HCT116 (cell line): ENCODE measurements at regions of chr3 and their contacts with region 1.

Region 1: DNA sequence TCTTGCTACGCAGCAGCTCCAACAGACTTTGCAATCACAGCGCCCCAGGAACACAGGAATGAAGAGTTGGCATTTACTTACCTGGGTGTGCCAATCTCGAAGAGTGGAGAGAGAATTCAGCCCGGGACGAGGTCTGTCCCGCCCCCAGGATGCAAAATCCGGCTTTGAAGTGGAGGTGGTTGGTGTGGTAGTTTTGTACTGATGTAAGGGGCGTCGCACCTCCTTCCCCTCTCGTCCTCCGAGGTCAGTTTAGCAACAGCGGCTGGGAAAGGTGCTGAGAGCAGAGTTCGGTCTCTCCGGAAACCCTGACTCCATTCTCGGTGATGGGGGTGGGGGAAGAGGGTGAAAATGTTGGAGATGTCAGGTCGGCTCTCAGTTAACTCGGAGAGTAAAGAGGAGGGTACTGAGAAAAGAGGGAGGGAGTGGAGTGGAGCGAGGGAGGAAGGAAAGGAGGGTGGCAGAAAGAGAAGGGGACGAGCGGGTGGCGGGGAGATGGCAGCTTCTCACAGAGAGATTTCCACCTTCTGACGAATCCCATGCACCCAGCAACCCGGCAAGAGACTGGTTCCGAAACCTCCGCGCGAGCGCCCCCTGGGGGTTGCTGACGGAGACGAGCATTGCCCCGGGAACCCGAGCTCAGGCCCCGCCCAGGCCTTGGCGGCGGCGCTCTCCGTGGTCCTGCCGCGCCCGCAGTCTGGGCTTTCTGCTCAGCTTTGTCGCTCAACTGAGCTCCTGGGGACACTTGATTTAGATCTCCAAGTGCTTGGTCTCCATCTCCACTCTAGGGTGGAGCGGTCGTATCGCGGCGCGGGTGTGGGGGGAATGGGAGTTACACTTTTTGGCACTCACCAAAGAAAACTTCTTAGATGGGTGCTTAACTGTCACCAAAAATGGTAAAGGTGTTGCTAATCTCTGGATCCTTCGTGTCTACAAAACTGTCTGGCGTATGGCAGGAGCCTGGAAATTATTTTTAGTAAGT is at the start of gene CPNE4:
- DNase-seq: peak; percentile 33
- ATAC-seq: peak; percentile 100
- H3K4me3 ChIP-seq: no peak within 1 kb of the TSS
- H3K27ac ChIP-seq: no peak within 1 kb of the TSS
- H3K4me1 ChIP-seq: no peaks in the 10 kb centered on the region
- H3K27me3 ChIP-seq: peaks cover 21% of the 10 kb centered on the region
- CTCF ChIP-seq: peak; percentile 58 to 90 (median 73); a peak in 5 of 6 replicates
- POLR2A ChIP-seq: no peak
- RAD21 ChIP-seq: peak; percentile 56
- total RNA-seq, gene CPNE4: not detected

Region 2: GRCh38 chr3:131216801-131217200 is 818.0 kb before region 1 on chr3:
- CTCF ChIA-PET with region 1: no interaction called
- POLR2A ChIA-PET with region 1: no interaction called
- RAD21 ChIA-PET with region 1: no interaction called
- intact Hi-C with region 1: no loop called
- DNase-seq: peak; percentile 74
- ATAC-seq: peak; percentile 93
- H3K4me3 ChIP-seq: peak overlapping the region in 1 of 2 experiments; percentile 38; a peak in 1 of 4 replicates
- H3K27ac ChIP-seq: peak overlapping the region; percentile 2; the same call in 1 of the 2 replicates
- H3K4me1 ChIP-seq: peaks cover 15 to 30% of the 10 kb centered on the region in 2 experiments
- H3K27me3 ChIP-seq: no peaks in the 10 kb centered on the region
- CTCF ChIP-seq: no peak
- POLR2A ChIP-seq: no peak
- RAD21 ChIP-seq: no peak

Region 3: GRCh38 chr3:131568460-131568859 is 466.3 kb before region 1 on chr3:
- CTCF ChIA-PET with region 1: no interaction called
- POLR2A ChIA-PET with region 1: no interaction called
- RAD21 ChIA-PET with region 1: no interaction called
- intact Hi-C with region 1: no loop called
- DNase-seq: no peak
- ATAC-seq: no peak
- H3K4me3 ChIP-seq: no peak overlapping the region
- H3K27ac ChIP-seq: no peak overlapping the region
- H3K4me1 ChIP-seq: no peaks in the 10 kb centered on the region
- H3K27me3 ChIP-seq: peaks cover 64% of the 10 kb centered on the region
- CTCF ChIP-seq: peak in 2 of 3 experiments; percentile 25 to 31; a peak in 3 of 6 replicates
- POLR2A ChIP-seq: no peak
- RAD21 ChIP-seq: no peak

Region 4: GRCh38 chr3:131898346-131898745 is 136.4 kb before region 1 on chr3:
- CTCF ChIA-PET with region 1: no interaction called
- POLR2A ChIA-PET with region 1: no interaction called
- RAD21 ChIA-PET with region 1: no interaction called
- intact Hi-C with region 1: no loop called
- DNase-seq: no peak
- ATAC-seq: no peak
- H3K4me3 ChIP-seq: no peak overlapping the region
- H3K27ac ChIP-seq: no peak overlapping the region
- H3K4me1 ChIP-seq: no peaks in the 10 kb centered on the region
- H3K27me3 ChIP-seq: 0 out of 2 replicates have a peak, but pooled peaks cover 4% of the 10 kb centered on the region
- CTCF ChIP-seq: no peak
- POLR2A ChIP-seq: no peak
- RAD21 ChIP-seq: no peak

Region 5: DNA sequence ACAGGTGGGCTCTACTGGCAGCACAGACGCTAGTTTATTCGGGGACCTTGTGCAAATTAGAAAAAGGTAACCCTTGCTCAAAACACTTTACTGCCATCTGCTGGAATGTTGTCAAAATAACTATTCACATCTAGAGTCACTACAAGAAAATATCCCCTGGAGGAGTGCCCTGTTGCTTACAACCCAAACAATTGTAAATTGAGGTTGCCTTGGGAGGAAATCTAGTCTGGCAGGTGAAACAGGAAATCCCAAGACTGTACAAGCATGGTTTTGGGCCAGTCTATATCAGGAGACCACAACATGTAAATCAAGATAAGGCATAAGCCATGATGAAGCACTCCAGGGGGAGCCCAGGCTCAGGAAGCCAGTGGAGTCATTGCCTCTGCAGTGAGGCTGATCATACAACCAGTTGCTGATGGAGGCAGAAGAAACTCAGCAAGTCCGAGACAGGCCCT is 145.6 kb after region 1 on chr3:
- CTCF ChIA-PET with region 1: interaction called, 5 read pairs
- POLR2A ChIA-PET with region 1: no interaction called
- RAD21 ChIA-PET with region 1: no interaction called
- intact Hi-C with region 1: loop called (anchors 2 kb)
- DNase-seq: peak; percentile 34
- ATAC-seq: peak; percentile 90
- H3K4me3 ChIP-seq: no peak overlapping the region
- H3K27ac ChIP-seq: no peak overlapping the region
- H3K4me1 ChIP-seq: no peaks in the 10 kb centered on the region
- H3K27me3 ChIP-seq: peaks cover 49% of the 10 kb centered on the region
- CTCF ChIP-seq: peak; percentile 49 to 66 (median 54)
- POLR2A ChIP-seq: no peak
- RAD21 ChIP-seq: peak; percentile 64

Region 6: GRCh38 chr3:132210476-132211346 is 175.9 kb after region 1 on chr3:
- CTCF ChIA-PET with region 1: interaction called, 10 read pairs
- POLR2A ChIA-PET with region 1: no interaction called
- RAD21 ChIA-PET with region 1: no interaction called
- intact Hi-C with region 1: loop called (anchors 2 kb)
- DNase-seq: peak; percentile 39
- ATAC-seq: peak; percentile 97
- H3K4me3 ChIP-seq: no peak overlapping the region
- H3K27ac ChIP-seq: no peak overlapping the region
- H3K4me1 ChIP-seq: no peaks in the 10 kb centered on the region
- H3K27me3 ChIP-seq: peaks cover 11% of the 10 kb centered on the region; the same call in 1 of the 2 replicates
- CTCF ChIP-seq: peak; percentile 60 to 85 (median 85); a peak in 5 of 6 replicates
- POLR2A ChIP-seq: no peak
- RAD21 ChIP-seq: peak; percentile 75